Heart right ventricle (tissue), 16 donors: ENCODE measurements at regions of chr19 and their contacts with region 1.

Region 1: DNA sequence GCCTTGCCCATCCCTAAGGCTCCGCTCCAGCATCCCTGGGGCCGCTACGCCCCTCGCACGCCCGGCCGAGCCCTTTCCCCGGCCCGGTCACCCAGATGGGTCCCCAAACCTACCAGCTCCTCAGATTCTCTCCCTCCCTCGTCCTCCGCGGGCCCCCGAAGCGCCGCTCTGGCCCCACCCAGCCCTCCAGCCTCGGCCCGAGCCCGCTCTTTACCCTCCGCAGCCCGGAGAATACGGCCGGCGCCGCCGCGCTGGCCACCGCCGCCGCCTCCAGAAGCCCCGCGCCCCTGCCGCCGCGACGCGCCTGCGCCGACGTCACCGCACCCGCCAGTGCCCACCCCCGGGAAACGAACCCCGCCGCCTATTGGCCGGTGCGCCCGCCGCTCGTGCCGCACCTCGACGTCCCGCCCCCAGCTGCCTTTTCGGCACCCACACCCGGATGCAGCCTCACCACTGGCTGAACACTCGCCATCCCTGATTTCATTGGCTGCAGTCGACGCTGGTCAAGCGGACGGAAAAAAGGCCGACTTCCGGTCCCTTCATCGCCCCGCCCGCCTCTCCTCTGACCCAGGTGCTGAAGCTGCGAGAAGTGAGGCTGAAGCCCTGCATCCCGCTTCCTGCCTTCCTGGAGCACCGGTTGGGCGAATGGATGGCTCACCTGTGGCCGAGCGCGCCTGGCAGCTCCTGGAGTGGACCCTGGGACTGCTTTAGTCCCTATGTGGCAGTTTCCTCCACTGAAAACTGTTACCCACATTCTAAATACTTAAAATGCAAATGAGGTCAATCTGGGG is at the start of gene DAPK3:
- DNase-seq: peak; percentile 98
- ATAC-seq: peak; percentile 77 to 88 (median 86)
- H3K4me3 ChIP-seq: peak within 1 kb of the TSS; percentile 77 to 99 (median 96)
- H3K27ac ChIP-seq: peak within 1 kb of the TSS; percentile 93 to 100 (median 98)
- H3K4me1 ChIP-seq: peaks cover 24 to 48% (median 46%) of the 10 kb centered on the region in 9 donors
- H3K27me3 ChIP-seq: no peaks in the 10 kb centered on the region
- CTCF ChIP-seq: peak in 4 of 9 donors; percentile 10 to 32 (median 15)
- total RNA-seq, gene DAPK3: 72.5 to 222 (median 99.5) TPM

Region 2: DNA sequence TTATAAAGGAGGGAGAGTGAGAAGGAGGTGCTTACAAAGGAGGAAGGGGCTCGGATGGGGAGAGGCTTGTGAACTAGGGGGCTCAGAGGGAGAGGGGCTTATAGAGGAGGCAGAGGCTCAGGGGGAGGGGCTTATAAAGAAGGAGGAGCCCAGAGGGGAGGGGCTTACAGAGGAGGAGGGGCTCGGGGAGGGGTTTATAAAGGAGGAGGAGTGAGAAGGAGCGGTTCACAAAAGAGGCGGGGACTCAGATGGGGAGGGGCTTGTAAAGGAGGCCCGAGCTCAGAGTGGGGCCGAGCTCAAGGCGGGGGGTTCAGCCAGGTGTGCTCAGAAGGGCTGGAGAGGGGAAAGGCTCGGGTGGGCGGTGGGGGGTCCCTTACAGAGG is 491.2 kb before region 1 on chr19:
- intact Hi-C with region 1: no loop called
- DNase-seq: no peak
- ATAC-seq: no peak
- H3K4me3 ChIP-seq: no peak overlapping the region
- H3K27ac ChIP-seq: no peak overlapping the region
- H3K4me1 ChIP-seq: peaks cover 0 to 3% (median 0%) of the 10 kb centered on the region in 9 donors
- H3K27me3 ChIP-seq: peaks cover 15 to 54% (median 46%) of the 10 kb centered on the region in 7 donors
- CTCF ChIP-seq: no peak

Region 3: GRCh38 chr19:3950871-3951861 is 19.8 kb before region 1 on chr19:
- intact Hi-C with region 1: loop called in 3 of 10 experiments (anchors 2 kb)
- DNase-seq: peak; percentile 64 to 76
- ATAC-seq: peak; percentile 26 to 84 (median 76)
- H3K4me3 ChIP-seq: peak overlapping the region; percentile 27 to 60 (median 48)
- H3K27ac ChIP-seq: peak overlapping the region; percentile 68 to 98 (median 93)
- H3K4me1 ChIP-seq: peaks cover 6 to 55% (median 34%) of the 10 kb centered on the region in 9 donors
- H3K27me3 ChIP-seq: no peaks in the 10 kb centered on the region
- CTCF ChIP-seq: no peak